ENCODE measurements at regions of chr17 and their contacts with region 1.

Region 1: GRCh38 chr17:47895856-47896671 is at the start of gene SP2:
- DNase-seq: peak; percentile 98 to 100 (median 99)
- ATAC-seq: peak; percentile 85
- H3K4me3 ChIP-seq: peak within 1 kb of the TSS; percentile 91 to 94
- H3K4me3 Mint-ChIP-seq: peak within 1 kb of the TSS; percentile 99
- H3K27ac ChIP-seq: peak within 1 kb of the TSS; percentile 88 to 99
- H3K27ac Mint-ChIP-seq: peak within 1 kb of the TSS; percentile 100
- H3K4me1 ChIP-seq: peaks cover 32% of the 10 kb centered on the region
- H3K4me1 Mint-ChIP-seq: peaks cover 57% of the 10 kb centered on the region
- H3K27me3 ChIP-seq: no peaks in the 10 kb centered on the region
- H3K27me3 Mint-ChIP-seq: no peaks in the 10 kb centered on the region
- CTCF ChIP-seq: no peak
- total RNA-seq, gene SP2: 24.5 to 26.0 TPM

Region 2: DNA sequence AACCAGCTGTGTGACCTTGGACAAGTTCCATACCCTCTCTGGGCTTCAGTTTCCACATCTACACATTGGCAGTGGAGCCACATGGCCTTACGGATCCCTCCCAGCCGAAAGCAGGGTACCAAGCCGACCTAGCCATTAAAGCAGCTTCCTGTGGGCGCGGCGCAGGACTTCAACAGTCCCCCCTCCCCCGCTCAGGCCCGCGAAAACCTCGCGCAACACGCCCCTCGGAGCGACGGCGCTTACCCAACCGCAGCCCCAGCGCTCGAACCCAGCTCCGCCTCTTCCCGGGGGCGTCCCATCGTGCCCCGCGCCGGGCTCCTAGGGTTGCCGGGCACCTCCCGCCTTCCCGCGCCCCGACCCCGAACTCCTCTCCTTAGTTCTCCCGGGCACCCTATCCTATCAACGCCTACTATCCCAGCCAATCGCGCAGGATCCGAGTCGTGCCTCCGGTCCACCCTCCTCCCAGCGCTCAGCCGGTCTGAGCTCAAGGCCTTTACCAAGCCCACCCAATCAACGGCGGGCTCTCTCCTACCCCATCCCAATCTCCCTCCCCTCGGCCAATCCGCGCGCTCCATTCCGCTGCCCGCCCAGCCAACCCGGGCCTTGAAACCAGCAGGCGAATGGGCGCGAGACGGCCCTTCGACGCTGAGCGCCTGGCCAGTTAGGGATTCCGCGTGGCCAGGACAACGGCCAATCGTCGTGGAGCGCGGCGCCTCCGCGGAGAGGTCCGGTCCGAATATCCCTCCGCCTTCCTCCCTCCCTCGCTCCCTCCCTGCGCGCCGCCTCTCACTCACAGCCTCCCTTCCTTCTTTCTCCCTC is 246.7 kb before region 1 on chr17 and contains the start of gene KPNB1:
- CTCF ChIA-PET with region 1: no interaction called
- POLR2A ChIA-PET with region 1: interaction called, 4 read pairs
- intact Hi-C with region 1: loop called in 1 of 2 experiments (anchors 1 kb)
- DNase-seq: peak; percentile 94 to 99 (median 97)
- ATAC-seq: peak; percentile 82
- H3K4me3 ChIP-seq: peak within 1 kb of the TSS; percentile 70 to 89
- H3K4me3 Mint-ChIP-seq: peak within 1 kb of the TSS; percentile 100
- H3K27ac ChIP-seq: peak within 1 kb of the TSS; percentile 75 to 90
- H3K27ac Mint-ChIP-seq: peak within 1 kb of the TSS; percentile 99
- H3K4me1 ChIP-seq: peaks cover 41% of the 10 kb centered on the region
- H3K4me1 Mint-ChIP-seq: peaks cover 51% of the 10 kb centered on the region
- H3K27me3 ChIP-seq: no peaks in the 10 kb centered on the region
- H3K27me3 Mint-ChIP-seq: no peaks in the 10 kb centered on the region
- CTCF ChIP-seq: no peak
- total RNA-seq, gene KPNB1: 170 to 173 TPM

Region 3: DNA sequence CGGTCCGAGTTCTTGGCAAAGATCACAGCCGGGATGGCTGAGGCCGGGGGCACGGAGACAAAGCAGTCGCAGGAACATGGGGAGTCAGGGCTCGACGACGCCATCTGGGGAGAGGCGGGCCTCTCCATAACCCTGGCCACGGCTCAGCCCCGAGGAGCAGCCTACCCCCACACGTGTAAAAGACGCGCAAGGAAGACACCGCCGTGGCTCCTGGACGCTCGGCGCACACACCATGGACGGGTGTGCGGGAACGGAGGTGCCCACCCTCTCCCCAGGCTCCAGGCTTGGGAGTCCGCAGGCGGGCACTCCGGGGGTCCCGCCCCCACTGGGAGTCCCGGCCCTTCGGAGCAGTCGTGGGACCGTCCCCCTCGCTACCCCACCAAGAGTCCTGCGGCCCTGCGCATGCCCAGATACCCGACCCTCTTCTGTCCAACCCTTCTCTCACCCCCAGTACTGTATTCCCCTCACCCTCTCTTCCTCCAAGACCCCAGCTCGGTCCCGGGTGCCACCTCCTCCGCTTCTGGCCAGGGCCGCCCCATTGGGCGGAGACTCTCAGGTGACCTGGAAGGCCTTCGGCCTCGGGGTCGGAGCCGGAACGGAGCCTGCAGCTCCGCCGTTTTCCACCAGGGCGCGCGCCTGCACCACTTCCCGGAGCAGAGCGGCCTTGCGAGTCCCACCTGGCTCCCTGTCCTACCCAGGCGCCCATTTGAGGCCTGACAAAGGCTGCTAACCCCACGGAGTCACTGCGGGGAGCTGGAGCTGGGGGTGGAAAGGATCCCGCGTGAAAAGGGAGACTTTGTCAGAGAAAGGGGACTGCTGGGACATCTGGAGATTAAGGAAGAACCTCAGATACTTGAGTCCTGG is 55.1 kb before region 1 on chr17 and contains the start of gene SCRN2:
- CTCF ChIA-PET with region 1: interaction called, 583 read pairs
- POLR2A ChIA-PET with region 1: interaction called, 26 read pairs
- intact Hi-C with region 1: loop called in 1 of 2 experiments (anchors 1 kb)
- DNase-seq: peak; percentile 71 to 93 (median 88)
- ATAC-seq: peak; percentile 91
- H3K4me3 ChIP-seq: peak within 1 kb of the TSS; percentile 86 to 97
- H3K4me3 Mint-ChIP-seq: peak within 1 kb of the TSS; percentile 92
- H3K27ac ChIP-seq: peak within 1 kb of the TSS; percentile 58 to 61
- H3K27ac Mint-ChIP-seq: peak within 1 kb of the TSS; percentile 87
- H3K4me1 ChIP-seq: peaks cover 33% of the 10 kb centered on the region
- H3K4me1 Mint-ChIP-seq: peaks cover 28% of the 10 kb centered on the region
- H3K27me3 ChIP-seq: peaks cover 8 to 12% of the 10 kb centered on the region in 2 experiments
- H3K27me3 Mint-ChIP-seq: peaks cover 24% of the 10 kb centered on the region
- CTCF ChIP-seq: peak; percentile 97
- total RNA-seq, gene SCRN2: 17.6 to 19.8 TPM

Region 4: DNA sequence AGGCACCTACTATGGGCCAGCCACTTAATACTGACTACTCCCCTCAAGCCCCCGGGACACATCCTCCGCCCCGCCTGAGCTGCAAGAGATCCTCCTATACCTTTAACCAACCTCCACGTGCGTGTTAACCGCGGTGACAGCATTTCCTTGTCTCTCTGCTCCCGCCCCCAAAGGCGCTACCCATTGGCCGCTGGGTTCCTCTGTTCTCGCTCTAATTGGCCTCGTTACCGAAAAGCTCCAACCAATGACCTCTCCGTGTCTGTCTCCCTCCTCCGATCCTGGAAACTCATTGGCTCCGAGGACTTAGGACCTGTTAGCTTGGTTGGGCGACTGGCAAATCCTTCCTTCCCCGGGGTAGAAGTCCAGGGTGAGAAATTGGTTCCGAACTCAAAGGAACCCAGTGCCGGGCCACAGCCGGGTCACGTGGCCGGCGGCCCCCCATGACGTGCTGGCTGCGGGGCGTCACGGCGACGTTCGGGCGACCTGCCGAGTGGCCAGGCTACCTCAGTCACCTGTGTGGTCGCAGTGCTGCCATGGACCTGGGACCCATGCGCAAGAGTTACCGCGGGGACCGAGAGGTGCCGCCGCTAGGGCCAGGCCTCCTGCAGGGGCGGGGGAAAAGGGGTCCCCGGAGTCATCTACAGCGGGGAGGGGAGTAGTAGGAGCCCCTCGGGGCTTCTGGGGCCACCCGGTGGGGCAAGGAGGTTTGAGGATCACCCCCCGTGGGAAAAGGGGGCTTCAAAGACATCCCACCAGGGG is 45.4 kb after region 1 on chr17 and contains the start of gene PNPO:
- CTCF ChIA-PET with region 1: interaction called, 7 read pairs
- POLR2A ChIA-PET with region 1: interaction called, 19 read pairs
- intact Hi-C with region 1: loop called (anchors 1 kb)
- DNase-seq: peak; percentile 82 to 98 (median 92)
- ATAC-seq: peak; percentile 97
- H3K4me3 ChIP-seq: peak within 1 kb of the TSS; percentile 72 to 92
- H3K4me3 Mint-ChIP-seq: peak within 1 kb of the TSS; percentile 86
- H3K27ac ChIP-seq: peak within 1 kb of the TSS; percentile 57 to 88
- H3K27ac Mint-ChIP-seq: peak within 1 kb of the TSS; percentile 87
- H3K4me1 ChIP-seq: peaks cover 47% of the 10 kb centered on the region
- H3K4me1 Mint-ChIP-seq: peaks cover 54% of the 10 kb centered on the region
- H3K27me3 ChIP-seq: no peaks in the 10 kb centered on the region
- H3K27me3 Mint-ChIP-seq: no peaks in the 10 kb centered on the region
- CTCF ChIP-seq: no peak
- total RNA-seq, gene PNPO: 5.7 to 5.8 TPM

Region 5: GRCh38 chr17:47970704-47971463 is 74.8 kb after region 1 on chr17 and contains the start of gene CDK5RAP3:
- CTCF ChIA-PET with region 1: interaction called, 23 read pairs
- POLR2A ChIA-PET with region 1: interaction called, 30 read pairs
- intact Hi-C with region 1: loop called (anchors 1 kb)
- DNase-seq: peak; percentile 97 to 99 (median 99)
- ATAC-seq: peak; percentile 98
- H3K4me3 ChIP-seq: peak within 1 kb of the TSS; percentile 77 to 99
- H3K4me3 Mint-ChIP-seq: peak within 1 kb of the TSS; percentile 98
- H3K27ac ChIP-seq: peak within 1 kb of the TSS; percentile 40 to 84
- H3K27ac Mint-ChIP-seq: peak within 1 kb of the TSS; percentile 89
- H3K4me1 ChIP-seq: peaks cover 19% of the 10 kb centered on the region
- H3K4me1 Mint-ChIP-seq: peaks cover 34% of the 10 kb centered on the region
- H3K27me3 ChIP-seq: no peaks in the 10 kb centered on the region
- H3K27me3 Mint-ChIP-seq: no peaks in the 10 kb centered on the region
- CTCF ChIP-seq: peak; percentile 97
- total RNA-seq, gene CDK5RAP3: 220 to 231 TPM

Region 6: GRCh38 chr17:48107168-48108132 is 211.4 kb after region 1 on chr17 and contains the start of gene SNX11:
- CTCF ChIA-PET with region 1: no interaction called
- POLR2A ChIA-PET with region 1: no interaction called
- intact Hi-C with region 1: loop called (anchors 1 to 2 kb)
- DNase-seq: peak; percentile 80 to 97 (median 92)
- ATAC-seq: peak; percentile 93
- H3K4me3 ChIP-seq: peak within 1 kb of the TSS; percentile 70 to 91
- H3K4me3 Mint-ChIP-seq: peak within 1 kb of the TSS; percentile 98
- H3K27ac ChIP-seq: peak within 1 kb of the TSS; percentile 78 to 82
- H3K27ac Mint-ChIP-seq: peak within 1 kb of the TSS; percentile 88
- H3K4me1 ChIP-seq: peaks cover 37% of the 10 kb centered on the region
- H3K4me1 Mint-ChIP-seq: peaks cover 60% of the 10 kb centered on the region
- H3K27me3 ChIP-seq: no peaks in the 10 kb centered on the region
- H3K27me3 Mint-ChIP-seq: no peaks in the 10 kb centered on the region
- CTCF ChIP-seq: no peak
- total RNA-seq, gene SNX11: 15.3 to 16.3 TPM

Measured in CD8-positive, alpha-beta T cell (primary cell).